ENCODE measurements at regions of chr16 and their contacts with region 1.

Region 1: DNA sequence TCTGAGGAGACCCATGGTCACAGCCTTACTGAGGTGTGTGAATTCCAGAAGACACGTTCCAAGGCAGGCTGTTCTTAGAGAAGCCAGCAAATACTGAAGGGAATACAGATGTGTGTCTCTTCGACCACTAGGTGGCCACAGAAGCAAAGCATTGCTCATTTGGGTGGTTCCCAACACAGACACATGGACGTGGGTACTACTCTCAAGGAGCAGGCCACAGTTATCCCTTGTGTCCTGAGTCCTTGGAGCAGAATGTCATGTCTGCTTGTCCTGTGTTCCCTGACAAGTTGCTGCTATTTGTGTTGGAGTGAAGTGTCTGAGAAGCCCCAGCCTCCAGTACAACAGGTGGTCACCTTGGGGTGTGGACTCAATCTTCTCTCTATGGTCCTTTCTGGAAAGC is 30.3 kb downstream of the HMOX2 start:
- DNase-seq: peak in 8 of 9 donors; percentile 40 to 75 (median 65)
- ATAC-seq: peak; percentile 58
- H3K4me3 ChIP-seq: peak overlapping the region; percentile 55
- H3K4me3 Mint-ChIP-seq: peak overlapping the region; percentile 71 to 87 (median 80)
- H3K27ac ChIP-seq: peak overlapping the region; percentile 93
- H3K27ac Mint-ChIP-seq: peak overlapping the region; percentile 94 to 100 (median 99)
- H3K4me1 ChIP-seq: peaks cover 40 to 58% of the 10 kb centered on the region in 2 donors
- H3K4me1 Mint-ChIP-seq: peaks cover 39 to 77% (median 60%) of the 10 kb centered on the region in 7 donors
- H3K27me3 ChIP-seq: no peaks in the 10 kb centered on the region
- H3K27me3 Mint-ChIP-seq: no peaks in the 10 kb centered on the region

Region 2: GRCh38 chr16:3712861-3713372 is 793.5 kb before region 1 on chr16:
- CTCF ChIA-PET with region 1: no interaction called
- POLR2A ChIA-PET with region 1: no interaction called
- intact Hi-C with region 1: no loop called
- DNase-seq: no peak
- ATAC-seq: no peak
- H3K4me3 ChIP-seq: no peak overlapping the region
- H3K4me3 Mint-ChIP-seq: peak overlapping the region in 4 of 10 donors; percentile 10 to 69 (median 31)
- H3K27ac ChIP-seq: no peak overlapping the region
- H3K27ac Mint-ChIP-seq: peak overlapping the region in 1 of 9 donors; percentile 70
- H3K4me1 ChIP-seq: peaks cover 3 to 9% of the 10 kb centered on the region in 2 donors
- H3K4me1 Mint-ChIP-seq: peaks cover 15 to 56% (median 40%) of the 10 kb centered on the region in 7 donors
- H3K27me3 ChIP-seq: no peaks in the 10 kb centered on the region
- H3K27me3 Mint-ChIP-seq: no peaks in the 10 kb centered on the region

Region 3: DNA sequence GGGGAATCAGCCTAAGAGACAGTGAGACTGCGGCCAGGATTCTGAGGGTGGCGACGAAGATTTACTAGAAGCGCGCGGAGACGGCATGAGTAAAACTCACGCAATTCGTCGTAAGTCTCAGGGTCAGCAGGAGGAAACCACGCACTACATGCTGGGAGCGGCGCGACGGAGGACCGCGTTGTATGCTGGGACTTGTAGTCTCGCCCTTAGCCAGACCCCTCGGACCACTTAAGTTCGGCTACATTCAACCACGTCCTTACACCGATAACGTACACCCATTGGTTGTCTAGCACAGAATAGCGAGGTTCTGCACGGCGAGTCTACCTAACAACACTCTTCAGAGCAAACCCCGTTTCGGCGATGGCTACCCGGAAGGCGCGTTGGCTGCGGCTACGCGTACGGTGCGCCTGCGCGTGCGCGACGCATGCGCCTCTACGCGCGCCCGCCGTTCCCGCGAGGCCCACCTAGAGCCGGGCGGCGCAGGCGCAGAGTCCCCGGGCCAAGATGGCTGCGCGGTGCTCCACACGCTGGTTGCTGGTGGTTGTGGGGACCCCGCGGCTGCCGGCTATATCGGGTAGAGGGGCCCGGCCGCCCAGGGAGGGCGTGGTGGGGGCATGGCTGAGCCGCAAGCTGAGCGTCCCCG is 81.0 kb before region 1 on chr16 and contains the start of gene DNAJA3:
- CTCF ChIA-PET with region 1: no interaction called
- POLR2A ChIA-PET with region 1: interaction called, 4 read pairs
- intact Hi-C with region 1: loop called in 1 of 2 experiments (anchors 1 kb)
- DNase-seq: peak; percentile 91 to 97 (median 95)
- ATAC-seq: peak; percentile 93
- H3K4me3 ChIP-seq: peak within 1 kb of the TSS; percentile 97
- H3K4me3 Mint-ChIP-seq: peak within 1 kb of the TSS; percentile 92 to 99 (median 98)
- H3K27ac ChIP-seq: peak within 1 kb of the TSS; percentile 95
- H3K27ac Mint-ChIP-seq: peak within 1 kb of the TSS; percentile 99 to 100 (median 100)
- H3K4me1 ChIP-seq: peaks cover 18% of the 10 kb centered on the region in 2 donors
- H3K4me1 Mint-ChIP-seq: peaks cover 26 to 37% (median 31%) of the 10 kb centered on the region in 7 donors
- H3K27me3 ChIP-seq: no peaks in the 10 kb centered on the region
- H3K27me3 Mint-ChIP-seq: peaks cover 0 to 4% (median 0%) of the 10 kb centered on the region in 5 donors
- total RNA-seq, gene DNAJA3: 33.6 to 79.8 (median 70.5) TPM

Region 4: GRCh38 chr16:4494746-4495490 is 11.5 kb before region 1 on chr16:
- CTCF ChIA-PET with region 1: interaction called, 29 read pairs
- POLR2A ChIA-PET with region 1: interaction called, 169 read pairs
- intact Hi-C with region 1: loop called in 1 of 2 experiments (anchors 1 kb)
- DNase-seq: no peak
- ATAC-seq: no peak
- H3K4me3 ChIP-seq: no peak overlapping the region
- H3K4me3 Mint-ChIP-seq: peak overlapping the region in 5 of 10 donors; percentile 16 to 58 (median 52)
- H3K27ac ChIP-seq: peak overlapping the region; percentile 14
- H3K27ac Mint-ChIP-seq: peak overlapping the region in 8 of 9 donors; percentile 72 to 94 (median 86)
- H3K4me1 ChIP-seq: peaks cover 35 to 77% of the 10 kb centered on the region in 2 donors
- H3K4me1 Mint-ChIP-seq: peaks cover 32 to 95% (median 84%) of the 10 kb centered on the region in 7 donors
- H3K27me3 ChIP-seq: no peaks in the 10 kb centered on the region
- H3K27me3 Mint-ChIP-seq: no peaks in the 10 kb centered on the region

Region 5: DNA sequence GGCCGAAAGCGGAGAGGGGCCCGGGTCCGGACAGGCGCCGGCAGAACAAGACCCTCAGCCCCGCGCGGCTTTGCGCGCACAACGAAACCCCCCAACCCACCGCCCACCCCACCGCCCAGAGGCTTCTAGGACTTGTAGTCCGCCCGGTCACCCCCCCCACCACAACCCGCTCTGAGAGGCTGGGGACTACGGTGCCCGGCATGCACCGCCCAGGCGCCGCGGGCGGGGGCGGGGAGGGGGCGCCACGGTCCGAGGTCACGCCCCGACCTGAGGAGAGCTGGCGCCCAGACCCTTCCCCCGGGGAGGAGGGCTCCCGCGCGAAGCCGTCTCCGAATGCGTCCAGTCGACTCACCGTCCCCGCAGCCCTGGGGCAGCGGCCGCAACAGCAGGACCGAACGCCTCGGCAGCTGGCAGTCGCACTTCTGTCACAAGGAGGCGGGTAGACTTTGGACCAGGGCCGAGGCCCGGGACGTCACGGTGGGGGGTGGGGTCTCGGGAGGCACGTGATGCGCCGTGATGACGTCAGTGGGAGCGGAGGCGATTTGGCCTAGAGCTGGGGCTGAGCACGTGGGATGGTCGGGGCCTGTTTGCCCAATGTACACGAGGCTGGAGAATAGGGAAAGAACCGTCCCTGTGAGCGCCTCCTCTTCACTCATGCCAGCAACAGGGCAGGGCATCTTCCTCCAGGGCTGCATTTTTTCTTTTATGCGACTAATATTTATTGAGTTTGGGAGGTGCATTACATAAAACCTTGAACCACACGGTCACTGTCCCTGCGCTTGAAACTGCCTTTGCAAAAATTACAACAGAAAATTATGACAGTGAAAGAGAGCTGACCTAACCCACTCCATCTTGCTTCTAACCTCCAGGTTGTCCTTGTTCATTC is 32.1 kb after region 1 on chr16 and contains the start of gene CDIP1:
- CTCF ChIA-PET with region 1: interaction called, 9 read pairs
- POLR2A ChIA-PET with region 1: interaction called, 15 read pairs
- intact Hi-C with region 1: loop called (anchors 1 to 2 kb)
- DNase-seq: peak; percentile 85 to 93 (median 90)
- ATAC-seq: peak; percentile 92
- H3K4me3 ChIP-seq: peak within 1 kb of the TSS; percentile 81
- H3K4me3 Mint-ChIP-seq: peak within 1 kb of the TSS; percentile 66 to 91 (median 82)
- H3K27ac ChIP-seq: peak within 1 kb of the TSS; percentile 96
- H3K27ac Mint-ChIP-seq: peak within 1 kb of the TSS; percentile 78 to 97 (median 92)
- H3K4me1 ChIP-seq: peaks cover 10 to 33% of the 10 kb centered on the region in 2 donors
- H3K4me1 Mint-ChIP-seq: peaks cover 24 to 44% (median 40%) of the 10 kb centered on the region in 7 donors
- H3K27me3 ChIP-seq: no peaks in the 10 kb centered on the region
- H3K27me3 Mint-ChIP-seq: peaks cover 0 to 9% (median 0%) of the 10 kb centered on the region in 5 donors
- total RNA-seq, gene CDIP1: 28.1 to 41.1 (median 31.0) TPM

Region 6: GRCh38 chr16:4580245-4580644 is 73.8 kb after region 1 on chr16:
- CTCF ChIA-PET with region 1: interaction called, 24 read pairs
- POLR2A ChIA-PET with region 1: no interaction called
- intact Hi-C with region 1: loop called (anchors 1 kb)
- DNase-seq: no peak
- ATAC-seq: no peak
- H3K4me3 ChIP-seq: no peak overlapping the region
- H3K4me3 Mint-ChIP-seq: no peak overlapping the region
- H3K27ac ChIP-seq: no peak overlapping the region
- H3K27ac Mint-ChIP-seq: no peak overlapping the region
- H3K4me1 ChIP-seq: no peaks in the 10 kb centered on the region
- H3K4me1 Mint-ChIP-seq: no peaks in the 10 kb centered on the region
- H3K27me3 ChIP-seq: no peaks in the 10 kb centered on the region
- H3K27me3 Mint-ChIP-seq: no peaks in the 10 kb centered on the region

Region 7: DNA sequence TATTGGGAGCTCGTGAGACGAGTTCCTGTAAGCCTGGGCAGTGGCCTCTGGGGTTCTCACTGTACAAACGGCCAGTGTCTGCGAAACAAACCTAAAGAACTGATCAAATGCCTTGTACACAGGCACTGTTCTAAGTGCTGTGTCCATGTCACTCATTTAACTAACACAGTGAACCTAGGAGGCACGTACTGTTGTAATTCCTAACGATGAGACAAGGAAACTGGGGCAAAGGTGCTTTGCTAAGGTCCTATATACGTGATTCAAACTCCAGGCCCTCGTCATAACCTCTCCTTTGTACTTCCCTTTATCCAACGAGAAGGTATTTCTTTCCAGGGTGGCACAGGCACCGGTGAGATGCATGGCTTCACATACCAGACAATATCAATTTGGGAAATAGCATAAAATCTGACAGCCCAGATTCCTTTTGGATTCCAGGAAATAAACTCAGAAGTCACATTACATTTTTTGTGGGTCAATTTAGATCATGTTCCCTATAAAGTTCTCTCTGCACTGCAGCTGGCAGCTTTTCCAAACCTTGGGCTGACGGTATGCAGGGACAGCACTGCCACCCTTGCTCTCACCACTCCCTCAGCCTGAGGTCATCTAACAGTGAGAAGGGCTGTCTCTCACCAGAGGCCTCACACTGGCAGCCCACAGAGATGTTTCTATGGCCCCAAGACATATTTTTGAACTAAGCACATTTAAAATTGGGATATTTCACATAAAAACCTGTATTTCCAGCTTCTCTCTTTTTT is 322.3 kb after region 1 on chr16:
- CTCF ChIA-PET with region 1: no interaction called
- POLR2A ChIA-PET with region 1: no interaction called
- intact Hi-C with region 1: no loop called
- DNase-seq: no peak
- ATAC-seq: no peak
- H3K4me3 ChIP-seq: no peak overlapping the region
- H3K4me3 Mint-ChIP-seq: no peak overlapping the region
- H3K27ac ChIP-seq: no peak overlapping the region
- H3K27ac Mint-ChIP-seq: no peak overlapping the region
- H3K4me1 ChIP-seq: no peaks in the 10 kb centered on the region
- H3K4me1 Mint-ChIP-seq: peaks cover 2 to 25% (median 7%) of the 10 kb centered on the region in 7 donors
- H3K27me3 ChIP-seq: no peaks in the 10 kb centered on the region
- H3K27me3 Mint-ChIP-seq: no peaks in the 10 kb centered on the region

Region 8: DNA sequence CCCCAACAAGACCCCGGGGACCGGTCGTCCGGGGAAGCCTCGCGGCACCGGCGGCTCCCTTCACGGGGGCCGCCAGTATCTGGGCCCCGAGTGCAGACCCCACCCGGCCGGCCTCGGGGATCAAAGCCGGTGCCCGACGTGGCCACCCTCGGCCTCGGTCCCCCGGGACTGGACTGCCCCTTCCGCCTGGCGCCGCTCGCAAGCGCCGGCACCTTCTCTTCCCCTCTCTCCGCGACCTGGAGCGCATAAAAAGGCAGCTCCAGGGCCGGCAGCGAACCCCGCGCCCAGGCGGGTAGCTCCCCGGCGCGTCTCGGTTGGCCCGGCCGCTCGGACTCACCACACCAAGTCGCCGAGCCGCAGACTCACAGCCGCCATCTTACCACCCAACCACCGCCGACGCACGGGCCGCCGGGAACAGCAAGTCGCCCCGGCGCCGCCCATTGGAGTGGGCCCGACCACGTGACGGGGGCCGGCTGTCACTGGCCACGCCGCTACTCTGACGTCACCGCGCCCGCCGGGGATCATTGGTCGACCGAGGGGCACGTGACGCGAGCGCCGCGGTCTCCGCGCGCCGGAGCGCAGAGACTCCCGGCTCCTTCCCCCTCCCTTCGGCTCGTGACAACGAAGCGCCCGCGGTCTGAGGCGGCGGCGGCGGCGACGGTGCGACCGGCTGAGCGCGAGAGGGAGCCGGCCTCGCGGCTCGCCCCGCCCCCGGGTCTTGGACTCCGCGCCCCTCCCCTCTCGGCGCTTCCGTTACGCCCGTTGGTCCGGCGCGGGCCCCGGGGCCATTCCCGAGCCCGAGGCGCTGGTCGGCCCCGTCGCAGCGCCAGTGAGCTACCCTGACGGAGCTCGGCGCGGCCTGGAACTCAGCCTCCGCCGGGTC is 340.7 kb after region 1 on chr16 and contains the starts of genes GLYR1 and UBN1:
- CTCF ChIA-PET with region 1: no interaction called
- POLR2A ChIA-PET with region 1: no interaction called
- intact Hi-C with region 1: loop called in 1 of 2 experiments (anchors 1 kb)
- DNase-seq: peak; percentile 99 to 100 (median 99)
- ATAC-seq: peak; percentile 95
- H3K4me3 ChIP-seq: peak within 1 kb of the TSS; percentile 84
- H3K4me3 Mint-ChIP-seq: peak within 1 kb of the TSS; percentile 86 to 96 (median 91)
- H3K27ac ChIP-seq: peak within 1 kb of the TSS; percentile 99
- H3K27ac Mint-ChIP-seq: peak within 1 kb of the TSS; percentile 74 to 94 (median 90)
- H3K4me1 ChIP-seq: peaks cover 30 to 38% of the 10 kb centered on the region in 2 donors
- H3K4me1 Mint-ChIP-seq: peaks cover 52 to 66% (median 58%) of the 10 kb centered on the region in 7 donors
- H3K27me3 ChIP-seq: no peaks in the 10 kb centered on the region
- H3K27me3 Mint-ChIP-seq: no peaks in the 10 kb centered on the region
- total RNA-seq, gene GLYR1: 98.7 to 122 (median 108) TPM
- total RNA-seq, gene UBN1: 39.5 to 58.7 (median 42.4) TPM